GM12878 (cell line): ENCODE measurements at regions of chr6 and their contacts with region 1.

Region 1: DNA sequence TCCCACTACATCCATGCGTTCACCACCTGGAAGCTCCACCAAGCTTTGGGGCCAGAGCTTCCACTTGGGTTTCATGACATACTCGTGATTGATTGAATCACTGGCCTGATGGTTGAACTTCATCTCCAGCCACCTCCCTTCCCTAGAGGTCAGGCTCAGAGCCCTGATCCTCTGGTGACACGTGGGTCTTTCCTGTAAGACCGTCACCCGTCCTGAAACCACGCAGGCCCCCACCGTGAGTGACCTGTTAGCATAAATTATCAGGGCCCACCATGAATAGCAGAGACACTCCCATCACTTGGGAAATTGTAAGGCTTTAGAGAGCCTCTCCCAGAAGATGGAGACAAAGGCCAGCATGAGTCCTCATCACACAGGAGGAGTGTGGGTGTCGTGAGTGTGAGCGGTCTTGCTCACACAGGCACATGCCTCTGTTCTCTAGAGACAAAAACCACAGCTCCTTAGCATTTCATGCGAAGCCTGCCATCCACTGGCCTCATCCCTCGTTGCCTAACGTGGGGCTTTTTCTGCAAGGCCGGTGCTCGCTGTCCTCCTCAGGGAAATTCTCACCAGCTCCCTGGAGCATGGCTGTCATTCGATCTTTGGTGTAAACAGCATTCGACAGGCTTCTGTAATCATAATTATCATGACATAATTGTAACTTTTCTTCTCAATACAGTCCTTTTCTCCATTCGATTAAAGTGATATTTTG is 65.1 kb upstream of the DUSP22 start:
- DNase-seq: peak; percentile 95
- ATAC-seq: peak; percentile 36
- H3K4me3 ChIP-seq: no peak overlapping the region
- H3K27ac ChIP-seq: peak overlapping the region; percentile 94
- H3K4me1 ChIP-seq: peaks cover 96% of the 10 kb centered on the region
- H3K27me3 ChIP-seq: no peaks in the 10 kb centered on the region
- CTCF ChIP-seq: peak; percentile 32 to 73 (median 60); a peak in 5 of 6 replicates
- EP300 ChIP-seq: peak in 1 of 2 experiments; percentile 75; a peak in 2 of 4 replicates
- POLR2A ChIP-seq: peak; percentile 50; the same call in 1 of the 2 replicates
- RAD21 ChIP-seq: peak; percentile 88

Region 2: GRCh38 chr6:152431-152830 is 74.8 kb before region 1 on chr6:
- CTCF ChIA-PET with region 1: interaction called, 11 read pairs
- POLR2A ChIA-PET with region 1: interaction called, 5 read pairs
- RAD21 ChIA-PET with region 1: interaction called, 14 read pairs
- SMC1A ChIA-PET with region 1: interaction called, 5 read pairs
- in situ Hi-C with region 1: no loop called
- intact Hi-C with region 1: no loop called
- DNase-seq: no peak
- ATAC-seq: no peak
- H3K4me3 ChIP-seq: no peak overlapping the region
- H3K27ac ChIP-seq: no peak overlapping the region; the same call in 1 of the 2 replicates
- H3K4me1 ChIP-seq: peaks cover 55% of the 10 kb centered on the region
- H3K27me3 ChIP-seq: no peaks in the 10 kb centered on the region
- CTCF ChIP-seq: no peak
- EP300 ChIP-seq: no peak
- POLR2A ChIP-seq: no peak
- RAD21 ChIP-seq: no peak

Region 3: DNA sequence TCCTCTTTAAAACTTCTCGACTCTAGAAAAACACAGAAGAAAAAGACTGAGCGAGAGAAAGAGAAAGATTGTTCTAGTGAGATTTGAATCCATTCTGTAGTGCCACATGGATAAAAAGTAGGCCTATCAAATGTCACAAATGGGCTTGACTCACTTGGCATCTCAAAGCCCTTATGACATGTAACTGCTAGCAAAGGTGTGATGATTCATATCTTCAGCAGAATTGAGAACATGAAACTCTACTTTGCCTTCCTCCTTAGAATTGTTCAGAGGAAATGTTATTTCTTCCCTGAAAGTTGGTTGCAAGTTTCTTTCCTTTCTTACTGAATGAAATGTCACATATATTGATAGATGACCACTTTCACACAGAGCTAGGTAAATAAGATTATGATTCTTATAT is 24.7 kb after region 1 on chr6:
- CTCF ChIA-PET with region 1: interaction called, 7 read pairs
- POLR2A ChIA-PET with region 1: interaction called, 7 read pairs
- RAD21 ChIA-PET with region 1: interaction called, 6 read pairs
- SMC1A ChIA-PET with region 1: interaction called, 6 read pairs
- in situ Hi-C with region 1: no loop called
- intact Hi-C with region 1: loop called (anchors 1 kb)
- DNase-seq: peak; percentile 70
- ATAC-seq: peak; percentile 79
- H3K4me3 ChIP-seq: no peak overlapping the region
- H3K27ac ChIP-seq: peak overlapping the region; percentile 66
- H3K4me1 ChIP-seq: peaks cover 42% of the 10 kb centered on the region
- H3K27me3 ChIP-seq: no peaks in the 10 kb centered on the region
- CTCF ChIP-seq: no peak
- EP300 ChIP-seq: no peak
- POLR2A ChIP-seq: no peak
- RAD21 ChIP-seq: peak; percentile 17; the same call in 1 of the 2 replicates

Region 4: GRCh38 chr6:305371-306206 is 78.4 kb after region 1 on chr6:
- CTCF ChIA-PET with region 1: interaction called, 12 read pairs
- POLR2A ChIA-PET with region 1: interaction called, 22 read pairs
- RAD21 ChIA-PET with region 1: interaction called, 60 read pairs
- SMC1A ChIA-PET with region 1: interaction called, 53 read pairs
- in situ Hi-C with region 1: no loop called
- intact Hi-C with region 1: no loop called
- DNase-seq: peak; percentile 97
- ATAC-seq: peak; percentile 84
- H3K4me3 ChIP-seq: peak overlapping the region; percentile 26; the same call in 1 of the 2 replicates
- H3K27ac ChIP-seq: peak overlapping the region; percentile 100
- H3K4me1 ChIP-seq: peaks cover 77% of the 10 kb centered on the region
- H3K27me3 ChIP-seq: no peaks in the 10 kb centered on the region
- CTCF ChIP-seq: no peak
- EP300 ChIP-seq: peak; percentile 100
- POLR2A ChIP-seq: no peak
- RAD21 ChIP-seq: peak; percentile 30; the same call in 1 of the 2 replicates

Region 5: DNA sequence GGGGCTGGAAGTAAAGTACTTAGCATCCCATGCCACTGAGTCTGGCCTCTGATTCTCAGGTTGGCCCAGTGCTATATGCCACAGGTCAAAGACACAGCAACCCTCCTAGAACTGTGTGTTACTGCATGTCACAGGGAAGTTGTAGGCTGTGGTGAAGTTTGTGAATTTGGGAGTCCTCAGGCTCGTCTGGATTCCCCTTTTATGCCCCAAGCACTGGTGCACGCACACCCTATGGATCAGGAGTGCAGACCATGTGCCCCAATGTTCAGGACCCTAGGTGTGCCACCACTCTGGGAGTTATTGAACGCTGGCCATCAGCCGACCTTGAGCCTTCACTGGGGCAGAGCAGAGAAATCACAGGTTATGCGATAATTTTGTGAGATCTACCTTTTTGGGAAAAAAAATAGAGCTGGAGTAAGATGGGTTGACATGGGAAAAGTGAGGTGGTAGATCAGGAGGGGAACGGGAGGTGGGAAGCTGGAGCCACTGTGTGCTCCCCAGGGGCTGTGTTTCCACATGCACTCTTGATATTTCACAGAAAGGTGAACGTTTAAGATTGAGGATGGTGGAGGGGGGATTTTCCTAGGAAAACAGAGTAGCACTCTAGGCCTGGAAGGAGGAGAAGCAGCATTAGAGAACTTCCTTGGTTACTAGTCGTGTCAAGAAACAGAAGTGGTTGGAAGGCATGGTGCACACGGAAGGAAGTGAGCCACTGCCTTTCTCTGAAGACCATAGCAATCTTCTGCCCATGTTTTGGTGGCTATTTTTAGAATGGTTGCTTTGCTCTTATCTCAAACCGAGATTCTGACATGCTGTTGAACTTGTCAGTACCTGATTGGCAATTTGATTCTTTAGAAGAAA is 109.2 kb after region 1 on chr6:
- CTCF ChIA-PET with region 1: interaction called, 19 read pairs
- POLR2A ChIA-PET with region 1: interaction called, 5 read pairs
- RAD21 ChIA-PET with region 1: interaction called, 62 read pairs
- SMC1A ChIA-PET with region 1: interaction called, 37 read pairs
- in situ Hi-C with region 1: no loop called
- intact Hi-C with region 1: no loop called
- DNase-seq: peak; percentile 88
- ATAC-seq: peak; percentile 12
- H3K4me3 ChIP-seq: peak overlapping the region; percentile 11; the same call in 1 of the 2 replicates
- H3K27ac ChIP-seq: peak overlapping the region; percentile 86
- H3K4me1 ChIP-seq: peaks cover 86% of the 10 kb centered on the region
- H3K27me3 ChIP-seq: no peaks in the 10 kb centered on the region
- CTCF ChIP-seq: no peak
- EP300 ChIP-seq: 0 out of 4 replicates have a peak, but pooled peaks of 1 of the 2 experiments have one; percentile 30
- POLR2A ChIP-seq: no peak
- RAD21 ChIP-seq: 0 out of 2 replicates have a peak, but pooled peaks have one; percentile 21

Region 6: DNA sequence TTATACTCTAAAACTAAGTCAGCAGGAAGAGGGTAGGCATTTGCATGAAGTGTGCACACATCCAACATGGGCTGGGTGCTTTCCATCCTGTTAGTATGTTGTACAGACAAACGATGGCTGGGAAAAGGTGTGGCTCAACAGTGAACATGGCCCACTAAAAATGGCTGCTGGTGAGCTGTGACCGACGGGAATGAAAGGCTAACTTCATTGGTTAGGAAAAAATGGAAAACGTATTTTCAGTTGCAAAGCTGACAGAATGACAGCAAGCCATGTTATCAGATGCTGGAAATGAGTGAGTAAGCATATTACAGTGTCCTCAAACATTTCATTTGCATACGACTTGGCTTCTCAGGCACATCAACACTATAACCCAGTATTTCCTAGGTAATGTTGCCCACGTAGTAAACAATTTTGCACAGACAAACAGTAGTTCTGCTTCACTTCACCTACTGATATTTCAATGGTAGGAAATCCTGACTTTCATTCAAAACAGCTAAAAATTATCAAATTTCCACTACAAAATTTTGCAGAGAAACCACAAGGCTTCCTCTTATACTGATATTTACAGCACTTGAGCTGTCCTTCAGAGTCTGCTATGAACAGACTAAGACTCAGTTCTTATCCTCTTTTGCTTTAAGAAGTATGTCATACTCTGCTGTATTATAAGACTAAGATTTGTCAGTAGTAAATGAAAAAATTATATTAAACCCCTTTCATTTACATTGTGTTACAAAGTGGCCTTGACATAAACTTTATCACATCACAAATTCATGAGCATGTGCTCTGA is 263.2 kb after region 1 on chr6:
- CTCF ChIA-PET with region 1: interaction called, 3 read pairs
- POLR2A ChIA-PET with region 1: no interaction called
- RAD21 ChIA-PET with region 1: interaction called, 10 read pairs
- SMC1A ChIA-PET with region 1: interaction called, 8 read pairs
- in situ Hi-C with region 1: no loop called
- intact Hi-C with region 1: loop called (anchors 10 kb)
- DNase-seq: peak; percentile 39
- ATAC-seq: peak; percentile 82
- H3K4me3 ChIP-seq: no peak overlapping the region
- H3K27ac ChIP-seq: peak overlapping the region; percentile 22; the same call in 1 of the 2 replicates
- H3K4me1 ChIP-seq: peaks cover 33% of the 10 kb centered on the region
- H3K27me3 ChIP-seq: no peaks in the 10 kb centered on the region
- CTCF ChIP-seq: no peak
- EP300 ChIP-seq: no peak
- POLR2A ChIP-seq: no peak
- RAD21 ChIP-seq: no peak

Region 7: GRCh38 chr6:1396952-1397868 is 1170.0 kb after region 1 on chr6:
- CTCF ChIA-PET with region 1: interaction called, 10 read pairs
- POLR2A ChIA-PET with region 1: no interaction called
- RAD21 ChIA-PET with region 1: no interaction called
- SMC1A ChIA-PET with region 1: no interaction called
- in situ Hi-C with region 1: no loop called
- intact Hi-C with region 1: no loop called
- DNase-seq: peak; percentile 43
- ATAC-seq: peak; percentile 92
- H3K4me3 ChIP-seq: no peak overlapping the region
- H3K27ac ChIP-seq: no peak overlapping the region
- H3K4me1 ChIP-seq: no peaks in the 10 kb centered on the region
- H3K27me3 ChIP-seq: peaks cover 11 to 17% of the 10 kb centered on the region in 2 experiments
- CTCF ChIP-seq: peak; percentile 88 to 98 (median 97)
- EP300 ChIP-seq: peak; percentile 58 to 74; a peak in 2 of 4 replicates
- POLR2A ChIP-seq: no peak
- RAD21 ChIP-seq: peak; percentile 80